Ascending aorta (tissue), 2 donors: ENCODE measurements at regions of chr6 and their contacts with region 1.

Region 1: GRCh38 chr6:162377735-162378134 is 349.8 kb downstream of the PRKN start:
- DNase-seq: no peak
- H3K4me3 ChIP-seq: no peak overlapping the region
- H3K27ac ChIP-seq: peak overlapping the region; percentile 21 to 57
- H3K4me1 ChIP-seq: peaks cover 4 to 7% of the 10 kb centered on the region in 2 donors
- H3K27me3 ChIP-seq: no peaks in the 10 kb centered on the region
- CTCF ChIP-seq: no peak

Region 2: GRCh38 chr6:162389353-162390085 is 11.8 kb after region 1 on chr6:
- intact Hi-C with region 1: loop called (anchors 2 kb)
- DNase-seq: no peak
- H3K4me3 ChIP-seq: no peak overlapping the region
- H3K27ac ChIP-seq: peak overlapping the region in 1 of 2 donors; percentile 75
- H3K4me1 ChIP-seq: peaks cover 0 to 25% of the 10 kb centered on the region in 2 donors
- H3K27me3 ChIP-seq: no peaks in the 10 kb centered on the region
- CTCF ChIP-seq: no peak

Region 3: GRCh38 chr6:162416831-162417537 is 39.2 kb after region 1 on chr6:
- intact Hi-C with region 1: no loop called
- DNase-seq: no peak
- H3K4me3 ChIP-seq: no peak overlapping the region
- H3K27ac ChIP-seq: no peak overlapping the region
- H3K4me1 ChIP-seq: no peaks in the 10 kb centered on the region
- H3K27me3 ChIP-seq: no peaks in the 10 kb centered on the region
- CTCF ChIP-seq: no peak